Naive thymus-derived CD4-positive, alpha-beta T cell (primary cell): ENCODE measurements at regions of chr11 and their contacts with region 1.

Region 1: DNA sequence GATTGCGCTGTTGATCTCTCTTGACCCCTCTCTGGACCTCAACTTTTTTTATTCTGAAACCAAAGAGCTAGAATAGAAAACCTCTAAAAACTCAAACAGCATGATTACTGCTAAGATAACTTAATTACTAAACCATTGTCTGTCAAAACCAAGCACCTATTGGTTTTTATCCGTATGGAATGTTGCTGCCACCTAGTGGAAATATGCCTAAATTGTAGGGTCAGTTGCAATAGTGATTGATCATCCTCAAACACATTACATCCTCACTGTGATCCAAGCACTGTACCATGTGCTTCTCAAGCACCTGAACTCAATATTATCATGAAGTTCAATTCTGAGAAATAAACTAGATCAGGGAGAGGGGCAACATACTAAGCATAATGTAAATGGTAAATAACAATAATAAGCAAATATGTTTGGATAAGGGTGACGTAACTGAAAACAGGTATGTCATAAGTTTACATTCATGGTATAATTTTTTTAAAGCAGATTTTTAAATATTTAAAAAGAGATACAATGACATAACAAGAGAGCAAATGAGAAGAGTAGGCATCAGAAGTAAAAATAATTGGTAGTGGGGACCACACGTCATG is 3.8 kb upstream of the OR5A2 start:
- DNase-seq: peak in 7 of 9 donors; percentile 22 to 64 (median 48)
- ATAC-seq: peak; percentile 77
- H3K4me3 ChIP-seq: no peak overlapping the region
- H3K4me3 Mint-ChIP-seq: no peak overlapping the region
- H3K27ac ChIP-seq: no peak overlapping the region
- H3K27ac Mint-ChIP-seq: no peak overlapping the region
- H3K4me1 ChIP-seq: no peaks in the 10 kb centered on the region
- H3K4me1 Mint-ChIP-seq: no peaks in the 10 kb centered on the region
- H3K27me3 ChIP-seq: peaks cover 0 to 3% of the 10 kb centered on the region in 2 donors
- H3K27me3 Mint-ChIP-seq: peaks cover 5 to 22% (median 13%) of the 10 kb centered on the region in 5 donors

Region 2: GRCh38 chr11:58674609-58675008 is 755.4 kb before region 1 on chr11:
- CTCF ChIA-PET with region 1: no interaction called
- POLR2A ChIA-PET with region 1: no interaction called
- intact Hi-C with region 1: no loop called
- DNase-seq: no peak
- ATAC-seq: no peak
- H3K4me3 ChIP-seq: no peak overlapping the region
- H3K4me3 Mint-ChIP-seq: no peak overlapping the region
- H3K27ac ChIP-seq: no peak overlapping the region
- H3K27ac Mint-ChIP-seq: no peak overlapping the region
- H3K4me1 ChIP-seq: no peaks in the 10 kb centered on the region
- H3K4me1 Mint-ChIP-seq: no peaks in the 10 kb centered on the region
- H3K27me3 ChIP-seq: no peaks in the 10 kb centered on the region
- H3K27me3 Mint-ChIP-seq: peaks cover 0 to 5% (median 0%) of the 10 kb centered on the region in 5 donors

Region 3: GRCh38 chr11:58685973-58686722 is 743.9 kb before region 1 on chr11:
- CTCF ChIA-PET with region 1: no interaction called
- POLR2A ChIA-PET with region 1: no interaction called
- intact Hi-C with region 1: no loop called
- DNase-seq: peak in 6 of 9 donors; percentile 7 to 26 (median 14)
- ATAC-seq: peak; percentile 47
- H3K4me3 ChIP-seq: no peak overlapping the region
- H3K4me3 Mint-ChIP-seq: peak overlapping the region in 8 of 10 donors; percentile 22 to 71 (median 48)
- H3K27ac ChIP-seq: no peak overlapping the region
- H3K27ac Mint-ChIP-seq: peak overlapping the region in 7 of 9 donors; percentile 5 to 79 (median 32)
- H3K4me1 ChIP-seq: peaks cover 0 to 11% of the 10 kb centered on the region in 2 donors
- H3K4me1 Mint-ChIP-seq: peaks cover 5 to 28% (median 13%) of the 10 kb centered on the region in 7 donors
- H3K27me3 ChIP-seq: no peaks in the 10 kb centered on the region
- H3K27me3 Mint-ChIP-seq: peaks cover 0 to 4% (median 0%) of the 10 kb centered on the region in 5 donors

Region 4: GRCh38 chr11:59207988-59208451 is 222.0 kb before region 1 on chr11:
- CTCF ChIA-PET with region 1: no interaction called
- POLR2A ChIA-PET with region 1: no interaction called
- intact Hi-C with region 1: loop called in 1 of 2 experiments (anchors 1 kb)
- DNase-seq: peak in 8 of 9 donors; percentile 20 to 52 (median 40)
- ATAC-seq: peak; percentile 72
- H3K4me3 ChIP-seq: no peak overlapping the region
- H3K4me3 Mint-ChIP-seq: peak overlapping the region; percentile 18 to 67 (median 50)
- H3K27ac ChIP-seq: no peak overlapping the region
- H3K27ac Mint-ChIP-seq: peak overlapping the region in 8 of 9 donors; percentile 38 to 75 (median 67)
- H3K4me1 ChIP-seq: peaks cover 4 to 19% of the 10 kb centered on the region in 2 donors
- H3K4me1 Mint-ChIP-seq: peaks cover 13 to 29% (median 20%) of the 10 kb centered on the region in 7 donors
- H3K27me3 ChIP-seq: no peaks in the 10 kb centered on the region
- H3K27me3 Mint-ChIP-seq: peaks cover 0 to 19% (median 0%) of the 10 kb centered on the region in 5 donors

Region 5: GRCh38 chr11:59263225-59263894 is 166.7 kb before region 1 on chr11:
- CTCF ChIA-PET with region 1: no interaction called
- POLR2A ChIA-PET with region 1: no interaction called
- intact Hi-C with region 1: loop called (anchors 1 kb)
- DNase-seq: peak in 5 of 9 donors; percentile 19 to 38 (median 32)
- ATAC-seq: peak; percentile 66
- H3K4me3 ChIP-seq: no peak overlapping the region
- H3K4me3 Mint-ChIP-seq: no peak overlapping the region
- H3K27ac ChIP-seq: no peak overlapping the region
- H3K27ac Mint-ChIP-seq: no peak overlapping the region
- H3K4me1 ChIP-seq: no peaks in the 10 kb centered on the region
- H3K4me1 Mint-ChIP-seq: no peaks in the 10 kb centered on the region
- H3K27me3 ChIP-seq: no peaks in the 10 kb centered on the region
- H3K27me3 Mint-ChIP-seq: no peaks in the 10 kb centered on the region

Region 6: DNA sequence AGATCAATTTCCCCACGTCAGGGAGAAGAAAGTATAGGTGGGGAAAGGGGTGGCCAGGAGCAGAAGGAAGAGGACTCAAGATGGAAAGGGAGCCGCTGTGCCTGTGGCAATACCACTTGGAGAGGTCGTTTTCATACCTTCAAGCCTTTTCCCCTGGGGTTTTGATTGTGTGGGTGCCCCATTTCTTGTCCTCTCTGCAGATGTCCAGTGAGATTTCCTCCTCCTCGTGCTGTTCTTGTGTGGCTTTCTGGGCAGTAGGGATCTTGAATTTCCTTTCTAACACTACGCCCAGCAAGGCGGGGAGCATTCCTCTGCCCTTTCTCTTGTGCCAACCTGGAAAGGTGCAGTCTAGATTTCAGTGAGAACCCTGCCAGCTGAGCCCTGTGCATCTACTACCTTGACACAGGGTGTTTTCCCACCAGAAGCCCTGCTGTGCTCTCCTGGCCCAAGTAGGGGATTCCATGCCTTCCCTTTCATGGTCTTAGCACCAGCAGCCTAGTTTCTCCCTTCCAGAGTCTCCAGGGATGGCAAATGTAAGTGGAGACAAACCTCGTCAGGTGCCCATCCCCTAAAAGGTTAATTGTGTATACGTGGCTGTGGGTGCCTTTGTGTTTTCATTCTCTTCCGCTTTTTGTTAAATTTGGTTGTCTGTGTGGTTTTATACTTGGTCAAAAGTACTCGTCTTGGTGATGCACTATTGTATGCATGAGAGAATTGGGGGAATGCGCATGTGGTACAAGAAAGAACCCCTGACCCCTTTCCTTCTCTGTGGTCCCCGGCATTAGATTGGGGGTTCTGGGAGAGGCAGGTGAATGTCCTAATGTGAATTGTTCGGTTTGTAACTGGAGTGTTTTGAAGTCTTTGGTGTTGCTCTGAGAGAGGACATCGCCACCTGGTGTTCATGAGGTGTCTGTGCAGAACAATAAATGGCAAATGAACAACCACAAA is 145.9 kb before region 1 on chr11:
- CTCF ChIA-PET with region 1: interaction called, 4 read pairs
- POLR2A ChIA-PET with region 1: no interaction called
- intact Hi-C with region 1: loop called (anchors 1 kb)
- DNase-seq: peak; percentile 21 to 68 (median 57)
- ATAC-seq: peak; percentile 90
- H3K4me3 ChIP-seq: peak overlapping the region; percentile 46
- H3K4me3 Mint-ChIP-seq: peak overlapping the region; percentile 67 to 88 (median 82)
- H3K27ac ChIP-seq: no peak overlapping the region
- H3K27ac Mint-ChIP-seq: peak overlapping the region in 6 of 9 donors; percentile 3 to 92 (median 24)
- H3K4me1 ChIP-seq: peaks cover 0 to 9% of the 10 kb centered on the region in 2 donors
- H3K4me1 Mint-ChIP-seq: peaks cover 11 to 19% (median 18%) of the 10 kb centered on the region in 7 donors
- H3K27me3 ChIP-seq: no peaks in the 10 kb centered on the region
- H3K27me3 Mint-ChIP-seq: peaks cover 5 to 18% (median 12%) of the 10 kb centered on the region in 5 donors

Region 7: GRCh38 chr11:59680287-59681154 is 250.5 kb after region 1 on chr11:
- CTCF ChIA-PET with region 1: no interaction called
- POLR2A ChIA-PET with region 1: no interaction called
- intact Hi-C with region 1: loop called (anchors 1 kb)
- DNase-seq: peak in 8 of 9 donors; percentile 43 to 66 (median 58)
- ATAC-seq: peak; percentile 97
- H3K4me3 ChIP-seq: no peak overlapping the region
- H3K4me3 Mint-ChIP-seq: no peak overlapping the region
- H3K27ac ChIP-seq: no peak overlapping the region
- H3K27ac Mint-ChIP-seq: no peak overlapping the region
- H3K4me1 ChIP-seq: no peaks in the 10 kb centered on the region
- H3K4me1 Mint-ChIP-seq: no peaks in the 10 kb centered on the region
- H3K27me3 ChIP-seq: no peaks in the 10 kb centered on the region
- H3K27me3 Mint-ChIP-seq: peaks cover 18 to 39% (median 23%) of the 10 kb centered on the region in 5 donors